ENCODE measurements at regions of chr9 and their contacts with region 1.

Region 1: GRCh38 chr9:107989544-107989943 is 500.0 kb upstream of the KLF4 start:
- DNase-seq: peak; percentile 84 to 91 (median 87)
- H3K4me3 ChIP-seq: peak overlapping the region in 1 of 3 experiments; percentile 48
- H3K4me3 Mint-ChIP-seq: peak overlapping the region in 1 of 2 donors; percentile 83
- H3K27ac ChIP-seq: peak overlapping the region; percentile 62 to 87
- H3K27ac Mint-ChIP-seq: peak overlapping the region; percentile 93 to 99 (median 96)
- H3K4me1 ChIP-seq: peaks cover 66 to 76% of the 10 kb centered on the region in 2 donors
- H3K4me1 Mint-ChIP-seq: peaks cover 74% of the 10 kb centered on the region
- H3K27me3 ChIP-seq: no peaks in the 10 kb centered on the region
- H3K27me3 Mint-ChIP-seq: peaks cover 0 to 4% (median 0%) of the 10 kb centered on the region in 3 donors
- CTCF ChIP-seq: no peak

Region 2: GRCh38 chr9:107949058-107949457 is 40.5 kb before region 1 on chr9:
- intact Hi-C with region 1: loop called (anchors 5 kb)
- DNase-seq: peak; percentile 76 to 94 (median 94)
- H3K4me3 ChIP-seq: no peak overlapping the region
- H3K4me3 Mint-ChIP-seq: no peak overlapping the region
- H3K27ac ChIP-seq: peak overlapping the region; percentile 0 to 68
- H3K27ac Mint-ChIP-seq: peak overlapping the region; percentile 85 to 98 (median 91)
- H3K4me1 ChIP-seq: peaks cover 43 to 45% of the 10 kb centered on the region in 2 donors
- H3K4me1 Mint-ChIP-seq: peaks cover 48% of the 10 kb centered on the region
- H3K27me3 ChIP-seq: no peaks in the 10 kb centered on the region
- H3K27me3 Mint-ChIP-seq: peaks cover 0 to 2% (median 0%) of the 10 kb centered on the region in 3 donors
- CTCF ChIP-seq: no peak

Region 3: GRCh38 chr9:107954312-107954711 is 35.2 kb before region 1 on chr9:
- intact Hi-C with region 1: loop called (anchors 5 kb)
- DNase-seq: peak; percentile 44 to 87 (median 80)
- H3K4me3 ChIP-seq: no peak overlapping the region
- H3K4me3 Mint-ChIP-seq: no peak overlapping the region
- H3K27ac ChIP-seq: peak overlapping the region in 1 of 2 donors; percentile 66
- H3K27ac Mint-ChIP-seq: peak overlapping the region; percentile 58 to 84 (median 77)
- H3K4me1 ChIP-seq: peaks cover 29 to 31% of the 10 kb centered on the region in 2 donors
- H3K4me1 Mint-ChIP-seq: peaks cover 37% of the 10 kb centered on the region
- H3K27me3 ChIP-seq: no peaks in the 10 kb centered on the region
- H3K27me3 Mint-ChIP-seq: peaks cover 0 to 3% (median 2%) of the 10 kb centered on the region in 3 donors
- CTCF ChIP-seq: no peak

Measured in CD14-positive monocyte (primary cell).